ENCODE measurements at regions of chr12 and their contacts with region 1.

Region 1: GRCh38 chr12:14691560-14691959 is 4.8 kb downstream of the GUCY2C start:
- DNase-seq: peak in 1 of 2 donors; percentile 56
- H3K4me3 ChIP-seq: no peak overlapping the region
- CTCF ChIP-seq: no peak
- POLR2A ChIP-seq: no peak

Region 2: GRCh38 chr12:14751993-14752392 is 60.4 kb after region 1 on chr12:
- intact Hi-C with region 1: loop called (anchors 2 kb)
- DNase-seq: no peak
- H3K4me3 ChIP-seq: no peak overlapping the region
- CTCF ChIP-seq: no peak
- POLR2A ChIP-seq: no peak

Measured in lower leg skin (tissue), 4 donors.